ENCODE measurements at regions of chr17 and their contacts with region 1.

Region 1: DNA sequence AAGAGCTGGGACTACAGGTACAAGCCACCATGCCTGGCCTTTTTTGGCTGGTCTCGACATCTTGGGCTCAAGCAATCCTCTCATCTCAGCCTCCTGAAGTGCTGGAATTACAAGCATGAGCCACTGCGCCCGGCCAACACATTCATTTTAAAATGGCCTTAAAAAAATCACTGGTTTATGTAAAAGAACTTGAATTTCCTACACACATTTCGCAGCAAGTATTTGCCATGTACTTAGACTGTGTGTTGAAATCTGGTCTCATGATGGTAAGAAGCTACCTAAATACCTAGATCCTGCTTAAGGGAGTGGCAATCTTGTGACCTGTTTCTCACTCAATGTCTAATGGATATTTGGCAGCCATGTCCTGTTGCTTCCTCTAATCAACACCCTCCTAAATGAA is 8.5 kb upstream of the CYTH1 start:
- DNase-seq: no peak
- ATAC-seq: no peak
- H3K4me3 ChIP-seq: no peak overlapping the region
- H3K4me3 Mint-ChIP-seq: peak overlapping the region in 1 of 3 donors; percentile 63
- H3K27ac ChIP-seq: peak overlapping the region; percentile 73
- H3K27ac Mint-ChIP-seq: peak overlapping the region; percentile 89 to 93
- H3K4me1 ChIP-seq: peaks cover 9 to 91% of the 10 kb centered on the region in 2 experiments
- H3K4me1 Mint-ChIP-seq: peaks cover 69 to 83% (median 81%) of the 10 kb centered on the region in 3 donors
- H3K27me3 ChIP-seq: no peaks in the 10 kb centered on the region
- H3K27me3 Mint-ChIP-seq: no peaks in the 10 kb centered on the region

Region 2: GRCh38 chr17:77570568-77570903 is 1220.0 kb before region 1 on chr17:
- CTCF ChIA-PET with region 1: no interaction called
- POLR2A ChIA-PET with region 1: no interaction called
- DNase-seq: no peak
- ATAC-seq: no peak
- H3K4me3 ChIP-seq: no peak overlapping the region
- H3K4me3 Mint-ChIP-seq: no peak overlapping the region
- H3K27ac ChIP-seq: no peak overlapping the region
- H3K27ac Mint-ChIP-seq: no peak overlapping the region
- H3K4me1 ChIP-seq: peaks cover 0 to 20% of the 10 kb centered on the region in 2 experiments
- H3K4me1 Mint-ChIP-seq: peaks cover 8 to 13% (median 11%) of the 10 kb centered on the region in 3 donors
- H3K27me3 ChIP-seq: peaks cover 0 to 46% of the 10 kb centered on the region in 2 experiments
- H3K27me3 Mint-ChIP-seq: peaks cover 13 to 26% of the 10 kb centered on the region in 2 donors

Region 3: GRCh38 chr17:78532922-78533640 is 257.5 kb before region 1 on chr17:
- CTCF ChIA-PET with region 1: no interaction called
- POLR2A ChIA-PET with region 1: no interaction called
- DNase-seq: peak in 1 of 35 experiments; percentile 12
- ATAC-seq: no peak
- H3K4me3 ChIP-seq: no peak overlapping the region
- H3K4me3 Mint-ChIP-seq: no peak overlapping the region
- H3K27ac ChIP-seq: no peak overlapping the region
- H3K27ac Mint-ChIP-seq: no peak overlapping the region
- H3K4me1 ChIP-seq: peaks cover 13 to 32% of the 10 kb centered on the region in 2 experiments
- H3K4me1 Mint-ChIP-seq: peaks cover 24 to 31% (median 29%) of the 10 kb centered on the region in 3 donors
- H3K27me3 ChIP-seq: peaks cover 0 to 3% of the 10 kb centered on the region in 2 experiments
- H3K27me3 Mint-ChIP-seq: no peaks in the 10 kb centered on the region

Region 4: GRCh38 chr17:78544881-78545755 is 245.4 kb before region 1 on chr17:
- CTCF ChIA-PET with region 1: no interaction called
- POLR2A ChIA-PET with region 1: no interaction called
- DNase-seq: no peak
- ATAC-seq: no peak
- H3K4me3 ChIP-seq: no peak overlapping the region
- H3K4me3 Mint-ChIP-seq: no peak overlapping the region
- H3K27ac ChIP-seq: no peak overlapping the region
- H3K27ac Mint-ChIP-seq: no peak overlapping the region
- H3K4me1 ChIP-seq: no peaks in the 10 kb centered on the region
- H3K4me1 Mint-ChIP-seq: peaks cover 0 to 6% (median 0%) of the 10 kb centered on the region in 3 donors
- H3K27me3 ChIP-seq: peaks cover 0 to under 1% of the 10 kb centered on the region in 2 experiments
- H3K27me3 Mint-ChIP-seq: peaks cover 0 to 2% of the 10 kb centered on the region in 2 donors

Region 5: DNA sequence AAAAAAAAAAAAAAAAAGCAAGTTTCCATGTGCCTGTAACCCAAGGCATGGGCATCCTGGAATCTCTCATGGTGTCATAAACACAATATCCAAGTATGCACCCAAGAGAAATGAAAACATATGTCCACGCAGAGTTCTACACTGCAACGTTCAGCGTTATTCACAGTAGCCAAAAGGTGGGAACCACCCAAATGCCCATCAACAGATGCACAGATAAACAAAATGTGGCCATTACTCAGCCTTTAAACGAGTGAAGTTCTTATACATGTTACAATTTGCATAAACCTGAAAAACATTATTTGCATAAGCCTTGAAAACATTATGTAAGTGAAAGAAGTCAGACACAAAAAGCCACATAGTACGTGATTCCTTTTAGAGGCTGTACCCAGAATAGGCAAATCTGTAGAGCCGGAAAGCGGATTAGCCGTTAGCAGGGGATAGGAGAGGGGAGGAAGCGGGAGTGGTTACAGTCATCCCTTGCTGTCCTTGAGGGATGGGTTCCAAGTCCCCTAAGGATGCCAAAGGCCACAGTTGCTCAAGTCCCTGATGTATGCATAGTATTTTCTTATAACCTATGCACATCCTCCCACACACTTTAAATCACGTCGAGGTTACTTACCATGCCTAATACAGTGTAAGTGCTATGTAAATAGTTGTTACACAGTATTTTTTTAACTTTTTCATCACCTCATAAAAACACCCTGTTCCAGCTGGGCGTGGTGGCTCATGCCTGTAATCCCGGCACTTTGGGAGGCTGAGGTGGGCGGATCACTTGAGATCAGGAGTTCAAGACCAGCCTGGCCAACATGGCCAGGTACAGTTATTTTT is 166.0 kb before region 1 on chr17:
- CTCF ChIA-PET with region 1: no interaction called
- POLR2A ChIA-PET with region 1: no interaction called
- DNase-seq: no peak
- ATAC-seq: no peak
- H3K4me3 ChIP-seq: no peak overlapping the region
- H3K4me3 Mint-ChIP-seq: no peak overlapping the region
- H3K27ac ChIP-seq: no peak overlapping the region
- H3K27ac Mint-ChIP-seq: no peak overlapping the region
- H3K4me1 ChIP-seq: peaks cover 0 to 4% of the 10 kb centered on the region in 2 experiments
- H3K4me1 Mint-ChIP-seq: no peaks in the 10 kb centered on the region
- H3K27me3 ChIP-seq: peaks cover 0 to 11% of the 10 kb centered on the region in 2 experiments
- H3K27me3 Mint-ChIP-seq: no peaks in the 10 kb centered on the region

Region 6: GRCh38 chr17:78819806-78820792 is 29.5 kb after region 1 on chr17:
- CTCF ChIA-PET with region 1: no interaction called
- POLR2A ChIA-PET with region 1: interaction called, 9 to 10 read pairs
- DNase-seq: peak in 1 of 35 experiments; percentile 27
- ATAC-seq: no peak
- H3K4me3 ChIP-seq: no peak overlapping the region
- H3K4me3 Mint-ChIP-seq: peak overlapping the region in 2 of 3 donors; percentile 56 to 70
- H3K27ac ChIP-seq: peak overlapping the region; percentile 90
- H3K27ac Mint-ChIP-seq: peak overlapping the region; percentile 91 to 92
- H3K4me1 ChIP-seq: peaks cover 42 to 53% of the 10 kb centered on the region in 2 experiments
- H3K4me1 Mint-ChIP-seq: peaks cover 55 to 80% (median 67%) of the 10 kb centered on the region in 3 donors
- H3K27me3 ChIP-seq: no peaks in the 10 kb centered on the region
- H3K27me3 Mint-ChIP-seq: no peaks in the 10 kb centered on the region

Measured in T-cell (primary cell).